ENCODE measurements at regions of chr10 and their contacts with region 1.

Region 1: GRCh38 chr10:118754720-118755480 is at the start of gene CACUL1:
- DNase-seq: peak; percentile 99
- H3K4me3 Mint-ChIP-seq: peak within 1 kb of the TSS; percentile 95
- H3K27ac Mint-ChIP-seq: peak within 1 kb of the TSS; percentile 82
- H3K4me1 Mint-ChIP-seq: peaks cover 36% of the 10 kb centered on the region
- H3K27me3 Mint-ChIP-seq: no peaks in the 10 kb centered on the region
- total RNA-seq, gene CACUL1: 18.4 to 19.2 TPM

Region 2: GRCh38 chr10:117375360-117376178 is 1379.3 kb before region 1 on chr10 and contains the start of gene PDZD8:
- CTCF ChIA-PET with region 1: no interaction called
- intact Hi-C with region 1: loop called (anchors 1 kb)
- DNase-seq: peak; percentile 85
- H3K4me3 Mint-ChIP-seq: peak within 1 kb of the TSS; percentile 94
- H3K27ac Mint-ChIP-seq: peak within 1 kb of the TSS; percentile 68
- H3K4me1 Mint-ChIP-seq: peaks cover 19% of the 10 kb centered on the region
- H3K27me3 Mint-ChIP-seq: peaks cover 18% of the 10 kb centered on the region
- total RNA-seq, gene PDZD8: 13.6 to 15.8 TPM

Region 3: GRCh38 chr10:118341791-118342637 is 412.9 kb before region 1 on chr10 and contains the start of gene FAM204A:
- CTCF ChIA-PET with region 1: no interaction called
- intact Hi-C with region 1: loop called (anchors 1 kb)
- DNase-seq: peak; percentile 98
- H3K4me3 Mint-ChIP-seq: peak within 1 kb of the TSS; percentile 95
- H3K27ac Mint-ChIP-seq: peak within 1 kb of the TSS; percentile 86
- H3K4me1 Mint-ChIP-seq: peaks cover 41% of the 10 kb centered on the region
- H3K27me3 Mint-ChIP-seq: no peaks in the 10 kb centered on the region
- total RNA-seq, gene FAM204A: 60.5 to 67.1 TPM

Region 4: GRCh38 chr10:118808601-118809356 is 53.9 kb after region 1 on chr10:
- CTCF ChIA-PET with region 1: no interaction called
- intact Hi-C with region 1: no loop called
- DNase-seq: no peak
- H3K4me3 Mint-ChIP-seq: no peak overlapping the region
- H3K27ac Mint-ChIP-seq: no peak overlapping the region
- H3K4me1 Mint-ChIP-seq: no peaks in the 10 kb centered on the region
- H3K27me3 Mint-ChIP-seq: no peaks in the 10 kb centered on the region

Region 5: DNA sequence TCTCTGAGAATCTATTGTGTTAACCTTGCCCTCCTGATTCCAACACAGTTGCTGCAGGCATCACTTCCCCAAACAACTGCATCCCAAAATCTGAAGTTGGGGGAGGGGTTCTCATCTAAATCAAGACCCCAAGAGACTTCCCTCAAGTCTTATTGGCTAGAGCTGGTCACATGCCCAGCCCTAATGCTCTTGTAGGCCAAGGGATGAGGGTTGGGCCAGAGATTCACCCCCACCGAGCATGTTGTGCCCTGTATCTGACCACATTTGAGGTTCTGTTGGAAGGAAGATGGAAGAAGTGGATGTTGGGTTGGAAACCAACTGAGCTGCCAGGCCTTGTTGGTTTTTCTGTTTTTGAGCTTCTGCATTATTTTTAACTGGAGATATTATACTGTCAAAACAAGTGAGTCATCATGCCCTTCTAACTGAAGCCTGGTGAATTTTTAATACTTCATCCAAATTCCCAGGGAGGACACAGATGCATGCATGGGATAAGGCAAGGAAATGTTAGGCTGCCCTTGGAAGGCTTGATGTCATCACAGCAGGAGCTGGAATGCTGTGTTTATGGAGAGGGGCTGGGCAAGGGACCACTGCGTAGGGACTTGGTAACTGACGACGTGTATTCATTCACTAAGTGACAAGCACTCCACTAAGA is 68.5 kb after region 1 on chr10:
- CTCF ChIA-PET with region 1: no interaction called
- intact Hi-C with region 1: no loop called
- DNase-seq: no peak
- H3K4me3 Mint-ChIP-seq: no peak overlapping the region
- H3K27ac Mint-ChIP-seq: no peak overlapping the region
- H3K4me1 Mint-ChIP-seq: no peaks in the 10 kb centered on the region
- H3K27me3 Mint-ChIP-seq: no peaks in the 10 kb centered on the region

Region 6: DNA sequence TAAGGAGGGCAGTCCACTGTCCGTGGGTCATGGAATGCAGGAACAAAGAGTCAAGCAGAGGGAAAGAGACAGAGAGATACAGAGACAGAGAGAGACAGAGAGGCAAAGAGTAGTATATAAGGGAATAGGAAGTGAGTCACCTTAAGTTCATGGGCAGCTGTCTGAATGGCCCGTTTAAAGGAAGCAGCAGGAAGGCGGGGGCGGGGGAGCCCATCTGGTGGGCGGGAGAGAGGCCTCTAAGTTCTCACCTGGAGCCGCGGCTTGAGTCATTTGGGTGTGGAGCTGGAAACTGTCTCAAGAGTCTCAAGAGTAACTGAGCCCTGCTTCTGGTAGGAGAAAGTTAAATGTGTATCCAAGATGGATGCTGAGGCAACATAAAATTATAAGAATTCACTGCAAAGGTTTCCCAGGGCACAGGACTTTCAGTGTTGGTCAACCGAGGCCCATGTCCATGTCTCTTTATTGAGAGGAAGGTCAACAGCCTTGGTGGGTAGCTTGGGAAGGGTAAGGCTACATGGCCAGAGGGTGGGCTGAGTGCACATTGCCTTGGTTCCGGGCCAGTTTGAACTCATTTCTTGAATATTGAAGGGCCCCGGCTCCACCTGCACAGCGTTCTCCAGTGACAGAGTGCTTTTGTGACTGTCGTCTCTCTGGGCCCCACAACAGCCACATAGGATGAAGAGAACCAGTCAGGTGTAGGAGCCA is 85.3 kb after region 1 on chr10:
- CTCF ChIA-PET with region 1: no interaction called
- intact Hi-C with region 1: loop called (anchors 1 kb)
- DNase-seq: peak; percentile 92
- H3K4me3 Mint-ChIP-seq: peak overlapping the region; percentile 23
- H3K27ac Mint-ChIP-seq: peak overlapping the region; percentile 69
- H3K4me1 Mint-ChIP-seq: peaks cover 14% of the 10 kb centered on the region
- H3K27me3 Mint-ChIP-seq: no peaks in the 10 kb centered on the region

Region 7: DNA sequence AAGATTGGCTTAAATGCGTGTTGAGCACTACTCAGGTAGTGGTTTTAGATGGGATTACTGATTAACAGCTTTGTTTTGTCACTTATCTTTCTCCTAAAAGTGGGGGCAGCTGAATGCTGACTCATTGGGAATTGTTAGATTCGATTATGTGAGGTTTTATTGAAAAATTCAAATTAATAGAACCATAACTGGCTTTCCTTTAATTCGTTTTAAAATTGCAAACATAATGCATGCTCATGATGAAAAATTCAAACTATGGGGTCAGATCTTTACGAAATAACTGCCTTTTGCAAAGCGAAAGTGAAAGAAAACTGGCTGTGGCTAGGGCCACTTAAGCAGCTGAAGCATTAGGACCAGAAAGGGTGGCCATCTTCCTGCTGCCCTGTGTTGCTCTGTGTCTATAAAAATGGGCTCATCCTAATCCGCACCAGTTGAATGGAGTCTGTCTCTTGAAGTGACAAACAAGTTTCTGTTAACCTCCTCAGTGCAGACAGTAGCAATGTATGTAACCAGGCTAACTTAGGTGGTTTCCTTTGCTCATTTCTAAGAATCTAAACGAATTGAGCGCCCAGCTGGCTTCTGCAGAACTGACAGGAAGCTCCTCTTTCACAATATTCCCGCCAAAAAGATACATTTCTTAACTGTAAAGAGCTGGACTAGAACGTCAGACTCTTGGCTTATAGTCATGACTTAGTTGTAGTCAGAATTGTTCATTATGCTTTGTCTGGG is 376.8 kb after region 1 on chr10:
- CTCF ChIA-PET with region 1: no interaction called
- intact Hi-C with region 1: loop called (anchors 1 kb)
- DNase-seq: peak; percentile 80
- H3K4me3 Mint-ChIP-seq: peak overlapping the region; percentile 80
- H3K27ac Mint-ChIP-seq: peak overlapping the region; percentile 99
- H3K4me1 Mint-ChIP-seq: peaks cover 44% of the 10 kb centered on the region
- H3K27me3 Mint-ChIP-seq: no peaks in the 10 kb centered on the region

Region 8: DNA sequence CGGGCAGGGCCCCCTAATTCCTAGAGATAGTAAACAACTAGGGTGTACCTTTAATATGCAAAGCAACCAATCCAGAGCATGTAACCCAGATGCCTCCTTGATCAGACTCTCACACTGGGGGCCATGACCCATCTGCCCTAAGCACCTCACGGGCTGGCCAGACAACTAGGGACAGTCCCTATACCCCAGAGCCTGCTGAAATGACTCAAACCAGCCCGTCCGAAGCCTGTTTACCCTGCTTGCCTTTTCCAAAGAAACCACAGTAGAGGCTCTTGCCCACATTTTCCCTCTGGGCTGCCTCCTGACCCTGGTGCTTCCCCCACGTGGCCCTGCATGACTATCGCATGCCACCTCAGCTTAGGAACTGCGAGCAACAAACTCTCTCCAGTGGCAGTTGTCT is 741.4 kb after region 1 on chr10:
- CTCF ChIA-PET with region 1: no interaction called
- intact Hi-C with region 1: loop called (anchors 10 kb)
- DNase-seq: peak; percentile 79
- H3K4me3 Mint-ChIP-seq: no peak overlapping the region
- H3K27ac Mint-ChIP-seq: peak overlapping the region; percentile 62
- H3K4me1 Mint-ChIP-seq: peaks cover 85% of the 10 kb centered on the region
- H3K27me3 Mint-ChIP-seq: no peaks in the 10 kb centered on the region

Region 9: GRCh38 chr10:119567978-119568377 is 813.1 kb after region 1 on chr10:
- CTCF ChIA-PET with region 1: no interaction called
- intact Hi-C with region 1: no loop called
- DNase-seq: no peak
- H3K4me3 Mint-ChIP-seq: no peak overlapping the region
- H3K27ac Mint-ChIP-seq: no peak overlapping the region
- H3K4me1 Mint-ChIP-seq: no peaks in the 10 kb centered on the region
- H3K27me3 Mint-ChIP-seq: no peaks in the 10 kb centered on the region

Region 10: DNA sequence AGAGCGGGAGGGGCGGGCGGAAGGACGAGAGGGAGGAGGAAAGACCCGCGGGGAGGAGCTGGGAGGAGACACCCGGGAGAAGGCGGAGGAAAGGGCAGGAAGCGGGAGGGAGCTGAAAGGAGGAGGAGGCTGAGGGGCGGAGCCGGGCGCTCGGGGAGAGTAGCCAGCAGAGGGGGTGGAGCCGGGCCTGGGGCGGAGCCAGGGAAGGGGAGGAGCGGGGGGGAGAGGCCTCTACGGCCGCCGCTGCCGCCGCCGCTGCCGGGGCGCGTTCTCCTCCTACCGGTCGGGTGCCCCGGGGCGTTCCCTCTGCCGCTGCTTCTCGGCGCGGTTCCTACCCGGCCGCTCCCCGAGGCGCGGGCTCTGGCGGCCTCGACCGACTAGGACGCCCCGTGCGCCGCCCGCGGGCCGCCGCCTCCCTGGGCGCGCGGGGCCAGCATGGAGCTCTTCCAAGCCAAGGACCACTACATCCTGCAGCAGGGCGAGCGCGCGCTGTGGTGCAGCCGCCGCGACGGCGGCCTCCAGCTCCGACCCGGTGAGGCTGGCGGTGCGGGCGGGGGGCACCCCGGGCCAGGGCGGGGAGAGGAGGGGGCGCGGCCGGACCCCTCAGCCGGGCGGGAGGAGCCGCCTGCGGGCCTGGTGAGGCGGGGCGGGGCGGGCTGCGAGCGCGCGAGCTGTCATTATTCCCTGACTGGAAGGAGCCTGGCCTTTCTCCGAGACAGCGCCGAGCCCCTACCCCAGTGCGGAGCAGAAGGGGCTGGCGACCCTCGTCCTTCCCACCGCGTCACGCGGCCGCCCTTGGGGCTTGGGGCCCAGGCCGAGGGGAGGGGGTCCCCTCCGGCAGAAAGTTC is 971.2 kb after region 1 on chr10 and contains the start of gene INPP5F:
- CTCF ChIA-PET with region 1: no interaction called
- intact Hi-C with region 1: loop called (anchors 10 kb)
- DNase-seq: peak; percentile 100
- H3K4me3 Mint-ChIP-seq: peak within 1 kb of the TSS; percentile 88
- H3K27ac Mint-ChIP-seq: peak within 1 kb of the TSS; percentile 78
- H3K4me1 Mint-ChIP-seq: peaks cover 41% of the 10 kb centered on the region
- H3K27me3 Mint-ChIP-seq: no peaks in the 10 kb centered on the region
- total RNA-seq, gene INPP5F: 10.5 to 10.9 TPM

Measured in activated naive CD4-positive, alpha-beta T cell treated with anti-CD3 and anti-CD28 coated beads for 36 hours (primary cell).